ENCODE measurements at regions of chr3 and their contacts with region 1.

Region 1: GRCh38 chr3:170961616-170962400 is 53.4 kb upstream of the EIF5A2 start:
- DNase-seq: no peak
- ATAC-seq: peak in 3 of 8 donors; percentile 44 to 65 (median 52)
- H3K4me3 ChIP-seq: no peak overlapping the region
- H3K27ac ChIP-seq: no peak overlapping the region
- H3K4me1 ChIP-seq: peaks cover 0 to 12% (median 0%) of the 10 kb centered on the region in 9 donors
- H3K27me3 ChIP-seq: no peaks in the 10 kb centered on the region
- CTCF ChIP-seq: peak; percentile 53 to 75 (median 63)

Region 2: DNA sequence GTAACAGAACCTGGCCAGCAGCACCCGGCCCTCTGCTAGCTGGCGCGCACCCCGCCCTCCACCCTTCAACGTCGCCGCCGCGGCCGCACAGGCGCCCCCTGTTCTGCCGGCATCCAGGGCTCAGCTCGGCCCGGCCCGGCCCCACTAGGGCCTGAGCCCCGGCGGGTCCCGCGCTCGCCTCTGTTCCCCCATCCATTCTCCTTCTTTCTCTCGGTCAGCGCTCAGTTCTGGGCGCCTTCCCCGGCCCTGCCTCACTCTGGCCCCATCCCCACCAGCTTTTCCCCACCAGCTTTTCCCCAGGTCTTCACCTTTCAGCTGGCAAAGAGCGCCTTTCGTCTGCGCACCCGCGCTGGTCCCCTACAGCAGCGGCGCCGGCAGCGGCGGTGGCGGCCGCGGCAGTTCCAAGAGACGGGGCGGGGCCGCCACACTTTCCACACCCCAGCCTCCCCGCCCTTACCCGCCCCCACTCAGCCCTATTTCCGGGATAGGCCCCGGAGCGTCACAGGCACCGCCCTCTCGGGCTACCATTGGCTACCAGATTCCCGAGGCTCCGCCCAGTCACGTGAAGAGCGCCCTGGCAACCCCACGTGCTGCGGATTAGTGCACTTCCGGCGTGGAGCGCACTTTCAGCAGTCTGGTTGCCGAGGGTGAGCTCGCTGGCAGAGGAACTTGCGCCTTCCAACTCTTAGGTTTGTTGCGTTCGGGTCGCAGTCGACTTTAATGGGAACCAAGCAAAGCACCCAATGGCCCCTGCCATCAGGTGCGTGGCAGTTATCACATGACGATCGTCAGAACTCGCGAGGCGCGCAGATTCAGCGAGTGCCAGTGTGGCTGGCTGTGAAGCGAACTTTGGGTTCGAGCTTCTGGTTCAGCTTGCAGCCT is 53.3 kb before region 1 on chr3 and contains the start of gene EIF5A2:
- intact Hi-C with region 1: no loop called
- DNase-seq: peak; percentile 95 to 96
- ATAC-seq: peak; percentile 98 to 99 (median 98)
- H3K4me3 ChIP-seq: peak within 1 kb of the TSS; percentile 59 to 80 (median 74)
- H3K27ac ChIP-seq: peak within 1 kb of the TSS in 9 of 10 donors; percentile 25 to 75 (median 68)
- H3K4me1 ChIP-seq: peaks cover 0 to 18% (median 10%) of the 10 kb centered on the region in 9 donors
- H3K27me3 ChIP-seq: no peaks in the 10 kb centered on the region
- CTCF ChIP-seq: peak in 2 of 9 donors; percentile 9 to 10
- total RNA-seq, gene EIF5A2: 4.8 to 14.8 (median 9.5) TPM

Region 3: DNA sequence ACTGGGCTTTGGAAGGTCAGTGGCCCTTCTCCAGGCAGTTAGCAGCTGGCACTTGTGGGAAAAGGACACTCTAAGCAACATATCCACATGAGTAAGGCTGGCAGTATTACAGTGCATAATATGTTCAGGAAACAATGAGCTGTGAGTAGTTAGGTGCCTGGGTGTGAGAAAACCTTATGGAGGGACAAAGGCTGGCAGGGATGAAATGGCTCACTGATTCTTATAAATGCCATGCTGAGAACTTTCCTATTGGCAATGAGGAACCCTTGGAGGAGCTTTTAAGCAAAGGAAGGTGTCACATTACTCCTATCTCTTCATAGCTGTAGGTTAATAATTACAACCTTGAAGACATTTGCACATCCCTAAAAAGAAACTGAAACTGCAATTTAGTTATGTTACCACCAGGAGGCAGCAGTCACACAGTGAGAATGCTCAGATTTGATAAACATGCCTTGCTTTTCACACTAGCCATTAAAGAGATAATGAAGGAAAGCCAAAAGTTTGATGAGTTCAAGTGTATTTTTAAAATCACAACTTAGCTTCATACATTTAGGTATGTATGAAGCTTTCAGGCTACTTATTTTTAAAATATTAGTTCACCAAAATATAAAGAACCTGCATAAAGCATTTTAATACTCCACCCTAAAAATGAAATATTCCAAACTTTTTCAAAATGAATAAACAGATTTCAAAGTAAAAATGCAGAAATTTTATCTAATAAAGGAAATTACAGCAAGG is 201.3 kb after region 1 on chr3:
- intact Hi-C with region 1: loop called in 1 of 10 experiments (anchors 10 kb)
- DNase-seq: no peak
- ATAC-seq: no peak
- H3K4me3 ChIP-seq: no peak overlapping the region
- H3K27ac ChIP-seq: no peak overlapping the region
- H3K4me1 ChIP-seq: peaks cover 0 to 3% (median 0%) of the 10 kb centered on the region in 9 donors
- H3K27me3 ChIP-seq: no peaks in the 10 kb centered on the region
- CTCF ChIP-seq: peak in 6 of 9 donors; percentile 21 to 60 (median 42)

Region 4: GRCh38 chr3:171306631-171307030 is 344.8 kb after region 1 on chr3:
- intact Hi-C with region 1: loop called in 1 of 10 experiments (anchors 10 kb)
- DNase-seq: peak; percentile 59 to 86
- ATAC-seq: peak; percentile 88 to 94 (median 92)
- H3K4me3 ChIP-seq: peak overlapping the region in 5 of 10 donors; percentile 9 to 23 (median 15)
- H3K27ac ChIP-seq: peak overlapping the region; percentile 47 to 90 (median 74)
- H3K4me1 ChIP-seq: peaks cover 0 to 39% (median 21%) of the 10 kb centered on the region in 9 donors
- H3K27me3 ChIP-seq: no peaks in the 10 kb centered on the region
- CTCF ChIP-seq: no peak

Region 5: GRCh38 chr3:171561596-171562323 is 600.0 kb after region 1 on chr3:
- intact Hi-C with region 1: loop called (anchors 2 to 5 kb)
- DNase-seq: no peak
- ATAC-seq: no peak
- H3K4me3 ChIP-seq: no peak overlapping the region
- H3K27ac ChIP-seq: peak overlapping the region in 1 of 10 donors; percentile 49
- H3K4me1 ChIP-seq: peaks cover 2 to 33% (median 11%) of the 10 kb centered on the region in 9 donors
- H3K27me3 ChIP-seq: no peaks in the 10 kb centered on the region
- CTCF ChIP-seq: no peak